HepG2 (cell line): ENCODE measurements at regions of chr1 and their contacts with region 1.

Region 1: GRCh38 chr1:44826375-44827196 is 16.5 kb downstream of the PTCH2 start:
- DNase-seq: peak; percentile 75
- ATAC-seq: peak; percentile 87
- H3K4me3 ChIP-seq: peak overlapping the region; percentile 37 to 71 (median 54)
- H3K27ac ChIP-seq: peak overlapping the region; percentile 88
- H3K4me1 ChIP-seq: peaks cover 54% of the 10 kb centered on the region
- H3K27me3 ChIP-seq: peaks cover 0 to 2% of the 10 kb centered on the region in 2 experiments; a peak in 1 of 5 replicates
- CTCF ChIP-seq: no peak; the same call in 1 of the 2 replicates
- EP300 ChIP-seq: 0 out of 4 replicates have a peak, but pooled peaks of 1 of the 2 experiments have one; percentile 19
- POLR2A ChIP-seq: peak in 1 of 2 experiments; percentile 65; a peak in 2 of 4 replicates
- RAD21 ChIP-seq: peak; percentile 22; the same call in 1 of the 2 replicates

Region 2: DNA sequence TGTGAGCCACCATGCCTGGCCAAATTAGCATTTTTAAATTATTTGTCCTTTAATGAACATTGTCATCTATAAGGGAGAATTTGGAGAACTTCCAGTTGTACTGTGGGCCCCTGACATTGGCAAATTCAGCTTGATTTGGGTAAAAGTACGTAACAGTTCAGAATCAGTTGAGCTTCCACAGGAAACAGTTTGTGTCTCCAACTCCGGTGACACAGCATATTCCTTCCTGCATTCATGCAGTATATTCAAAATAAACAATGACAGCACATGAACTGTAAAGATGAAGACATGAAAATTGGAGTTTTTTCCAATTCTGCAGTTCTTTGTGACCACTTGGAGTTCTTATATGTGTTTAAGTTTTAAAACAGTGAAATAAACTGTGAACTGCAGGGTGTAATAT is 393.4 kb before region 1 on chr1:
- CTCF ChIA-PET with region 1: no interaction called
- POLR2A ChIA-PET with region 1: no interaction called
- in situ Hi-C with region 1: no loop called
- intact Hi-C with region 1: no loop called
- DNase-seq: no peak
- ATAC-seq: no peak
- H3K4me3 ChIP-seq: no peak overlapping the region
- H3K27ac ChIP-seq: no peak overlapping the region
- H3K4me1 ChIP-seq: 0 out of 2 replicates have a peak, but pooled peaks cover 5% of the 10 kb centered on the region
- H3K27me3 ChIP-seq: no peaks in the 10 kb centered on the region
- CTCF ChIP-seq: no peak
- EP300 ChIP-seq: no peak
- POLR2A ChIP-seq: no peak
- RAD21 ChIP-seq: no peak

Region 3: DNA sequence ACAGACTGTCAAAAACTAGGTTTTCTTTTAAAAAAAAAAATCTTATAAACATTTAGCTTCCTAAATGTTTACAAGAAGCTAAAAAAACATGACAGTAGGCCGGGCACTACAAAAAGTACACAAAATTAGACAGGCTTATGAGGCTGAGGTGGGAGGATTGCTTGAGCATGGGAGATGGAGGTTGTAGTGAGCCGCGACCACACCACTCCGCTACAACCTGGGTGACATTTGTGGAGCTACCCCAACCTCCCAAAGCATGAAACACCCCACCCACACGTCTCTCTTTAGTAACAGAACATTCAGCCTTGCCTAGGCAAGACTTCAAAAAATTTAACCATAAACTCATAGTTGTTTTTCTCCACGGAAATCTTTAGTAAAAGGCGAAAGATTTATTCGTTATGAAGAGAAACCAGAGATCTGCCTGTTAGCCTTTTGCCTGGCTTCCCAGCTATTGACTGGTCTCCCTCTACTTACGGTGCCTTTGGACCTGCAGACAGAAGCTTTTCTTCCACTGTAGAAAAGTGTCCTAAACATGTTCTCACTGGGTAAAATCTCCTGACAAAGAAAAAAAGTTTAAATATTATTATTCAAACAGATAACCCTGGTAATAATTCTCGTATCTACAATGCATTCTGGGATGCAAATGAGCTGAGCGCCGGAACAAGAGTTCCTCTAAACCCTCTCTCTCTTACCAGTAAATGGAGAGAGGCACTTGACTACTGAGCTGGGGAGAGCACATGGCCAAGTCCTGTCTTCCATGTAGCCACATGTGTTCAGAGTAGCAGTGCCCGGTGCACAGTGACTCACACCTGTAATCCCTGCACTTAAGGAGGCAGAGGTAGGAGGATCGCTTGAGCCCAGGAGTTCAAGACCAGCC is 104.9 kb before region 1 on chr1:
- CTCF ChIA-PET with region 1: no interaction called
- POLR2A ChIA-PET with region 1: interaction called, 18 read pairs
- in situ Hi-C with region 1: no loop called
- intact Hi-C with region 1: no loop called
- DNase-seq: peak; percentile 95
- ATAC-seq: peak; percentile 94
- H3K4me3 ChIP-seq: no peak overlapping the region; a peak in 1 of 6 replicates
- H3K27ac ChIP-seq: peak overlapping the region; percentile 84
- H3K4me1 ChIP-seq: peaks cover 54% of the 10 kb centered on the region
- H3K27me3 ChIP-seq: 0 out of 5 replicates have a peak, but pooled peaks cover 0 to 6% of the 10 kb centered on the region in 2 experiments
- CTCF ChIP-seq: no peak
- EP300 ChIP-seq: peak; percentile 59 to 63; a peak in 3 of 4 replicates
- POLR2A ChIP-seq: peak; percentile 100
- RAD21 ChIP-seq: peak; percentile 86

Region 4: GRCh38 chr1:44775078-44775929 is 51.3 kb before region 1 on chr1 and contains the start of gene RPS8:
- CTCF ChIA-PET with region 1: no interaction called
- POLR2A ChIA-PET with region 1: interaction called, 20 read pairs
- in situ Hi-C with region 1: no loop called
- intact Hi-C with region 1: no loop called
- DNase-seq: peak; percentile 91
- ATAC-seq: peak; percentile 80
- H3K4me3 ChIP-seq: peak within 1 kb of the TSS; percentile 84 to 97 (median 96)
- H3K27ac ChIP-seq: peak within 1 kb of the TSS; percentile 81
- H3K4me1 ChIP-seq: peaks cover 40% of the 10 kb centered on the region
- H3K27me3 ChIP-seq: no peaks in the 10 kb centered on the region; a peak in 1 of 5 replicates
- CTCF ChIP-seq: 0 out of 2 replicates have a peak, but pooled peaks have one; percentile 9
- EP300 ChIP-seq: 0 out of 4 replicates have a peak, but pooled peaks of 1 of the 2 experiments have one; percentile 11
- POLR2A ChIP-seq: peak; percentile 99
- RAD21 ChIP-seq: peak; percentile 39
- total RNA-seq, gene RPS8: 2,628 and 3,186 TPM in 2 replicates

Region 5: DNA sequence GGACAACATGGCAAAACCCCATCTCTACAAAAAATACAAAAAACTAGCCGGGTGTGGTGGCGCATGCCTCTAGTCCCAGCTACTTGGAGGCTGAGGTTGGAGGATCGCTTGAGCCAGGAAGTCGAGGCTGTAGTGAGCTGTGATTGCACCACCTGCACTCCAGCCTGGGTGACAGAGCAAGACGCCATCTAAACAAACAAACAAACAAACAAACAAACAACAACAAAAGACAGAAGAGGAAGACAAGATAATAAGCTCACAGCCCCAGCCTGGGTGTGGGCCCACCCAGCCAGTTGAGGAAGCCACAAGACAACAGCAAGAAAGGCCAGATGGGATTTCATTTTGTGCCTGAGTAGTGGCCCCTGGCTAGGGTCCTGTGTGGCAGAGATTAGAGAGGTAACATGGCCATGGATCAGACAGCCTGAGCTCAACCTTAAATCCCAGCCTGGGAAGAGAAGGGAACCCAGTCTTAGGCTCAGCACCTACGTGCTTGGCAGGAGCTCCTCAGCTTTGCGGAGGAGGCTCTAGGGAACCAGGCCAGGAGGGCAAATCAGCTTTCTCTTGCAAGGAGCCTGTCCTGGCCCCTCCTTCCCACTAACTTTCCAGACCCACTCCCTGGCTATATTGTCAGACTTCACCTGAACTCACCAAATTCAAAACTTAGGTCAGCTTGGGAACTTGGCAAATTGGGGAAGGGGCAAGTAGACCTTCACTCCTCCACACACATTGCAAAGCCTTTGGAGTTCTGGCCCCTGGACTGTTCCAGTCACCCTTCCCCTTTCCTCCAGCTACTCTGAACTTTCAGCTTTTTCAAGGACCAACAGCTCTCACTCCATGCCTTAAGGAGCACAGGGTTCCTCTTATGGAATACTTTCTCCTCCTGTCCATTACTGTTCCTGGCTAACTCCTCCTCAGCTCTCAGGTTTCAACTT is 33.5 kb before region 1 on chr1:
- CTCF ChIA-PET with region 1: interaction called, 3 read pairs
- POLR2A ChIA-PET with region 1: interaction called, 168 read pairs
- in situ Hi-C with region 1: loop called (anchors 5 kb)
- intact Hi-C with region 1: loop called (anchors 2 kb)
- DNase-seq: no peak
- ATAC-seq: peak; percentile 6; the same call in 1 of the 3 replicates
- H3K4me3 ChIP-seq: no peak overlapping the region
- H3K27ac ChIP-seq: no peak overlapping the region
- H3K4me1 ChIP-seq: peaks cover 32% of the 10 kb centered on the region
- H3K27me3 ChIP-seq: peaks cover 0 to 8% of the 10 kb centered on the region in 2 experiments; a peak in 2 of 5 replicates
- CTCF ChIP-seq: no peak
- EP300 ChIP-seq: no peak
- POLR2A ChIP-seq: no peak
- RAD21 ChIP-seq: no peak

Region 6: GRCh38 chr1:44807262-44808062 is 19.1 kb before region 1 on chr1 and contains the start of gene DYNLT4:
- CTCF ChIA-PET with region 1: no interaction called
- POLR2A ChIA-PET with region 1: interaction called, 570 read pairs
- in situ Hi-C with region 1: no loop called
- intact Hi-C with region 1: loop called (anchors 2 kb)
- DNase-seq: peak; percentile 98
- ATAC-seq: peak; percentile 83
- H3K4me3 ChIP-seq: peak within 1 kb of the TSS; percentile 70 to 87 (median 78)
- H3K27ac ChIP-seq: peak within 1 kb of the TSS; percentile 100
- H3K4me1 ChIP-seq: peaks cover 73% of the 10 kb centered on the region
- H3K27me3 ChIP-seq: no peaks in the 10 kb centered on the region
- CTCF ChIP-seq: peak; percentile 21
- EP300 ChIP-seq: peak; percentile 71 to 92
- POLR2A ChIP-seq: peak in 1 of 2 experiments; percentile 79; a peak in 2 of 4 replicates
- RAD21 ChIP-seq: no peak
- total RNA-seq, gene DYNLT4: 0.77 TPM in 1 of 2 replicates, not detected in the other

Region 7: GRCh38 chr1:45011837-45012638 is 185.5 kb after region 1 on chr1 and contains the start of gene UROD:
- CTCF ChIA-PET with region 1: no interaction called
- POLR2A ChIA-PET with region 1: interaction called, 38 read pairs
- in situ Hi-C with region 1: loop called (anchors 25 kb)
- intact Hi-C with region 1: no loop called
- DNase-seq: peak; percentile 94
- ATAC-seq: peak; percentile 75
- H3K4me3 ChIP-seq: peak within 1 kb of the TSS; percentile 73 to 95 (median 78)
- H3K27ac ChIP-seq: peak within 1 kb of the TSS; percentile 85
- H3K4me1 ChIP-seq: peaks cover 32% of the 10 kb centered on the region
- H3K27me3 ChIP-seq: no peaks in the 10 kb centered on the region; a peak in 1 of 5 replicates
- CTCF ChIP-seq: peak; percentile 4; the same call in 1 of the 2 replicates
- EP300 ChIP-seq: 0 out of 4 replicates have a peak, but pooled peaks of 1 of the 2 experiments have one; percentile 12
- POLR2A ChIP-seq: peak; percentile 91 to 96
- RAD21 ChIP-seq: no peak
- total RNA-seq, gene UROD: 171 and 243 TPM in 2 replicates